CD4-positive, alpha-beta T cell (primary cell): ENCODE measurements at regions of chr2 and their contacts with region 1.

Region 1: GRCh38 chr2:79799729-79800128 is 286.9 kb downstream of the CTNNA2 start:
- DNase-seq: no peak
- ATAC-seq: no peak
- H3K4me3 ChIP-seq: no peak overlapping the region
- H3K4me3 Mint-ChIP-seq: no peak overlapping the region
- H3K27ac ChIP-seq: no peak overlapping the region
- H3K27ac Mint-ChIP-seq: no peak overlapping the region
- H3K4me1 ChIP-seq: no peaks in the 10 kb centered on the region
- H3K4me1 Mint-ChIP-seq: no peaks in the 10 kb centered on the region
- H3K27me3 ChIP-seq: no peaks in the 10 kb centered on the region
- H3K27me3 Mint-ChIP-seq: no peaks in the 10 kb centered on the region
- CTCF ChIP-seq: no peak

Region 2: GRCh38 chr2:79757526-79757925 is 42.2 kb before region 1 on chr2:
- CTCF ChIA-PET with region 1: no interaction called
- POLR2A ChIA-PET with region 1: no interaction called
- intact Hi-C with region 1: loop called in 1 of 2 experiments (anchors 5 kb)
- DNase-seq: no peak
- ATAC-seq: no peak
- H3K4me3 ChIP-seq: no peak overlapping the region
- H3K4me3 Mint-ChIP-seq: no peak overlapping the region
- H3K27ac ChIP-seq: no peak overlapping the region
- H3K27ac Mint-ChIP-seq: no peak overlapping the region
- H3K4me1 ChIP-seq: no peaks in the 10 kb centered on the region
- H3K4me1 Mint-ChIP-seq: no peaks in the 10 kb centered on the region
- H3K27me3 ChIP-seq: no peaks in the 10 kb centered on the region
- H3K27me3 Mint-ChIP-seq: no peaks in the 10 kb centered on the region
- CTCF ChIP-seq: no peak

Region 3: DNA sequence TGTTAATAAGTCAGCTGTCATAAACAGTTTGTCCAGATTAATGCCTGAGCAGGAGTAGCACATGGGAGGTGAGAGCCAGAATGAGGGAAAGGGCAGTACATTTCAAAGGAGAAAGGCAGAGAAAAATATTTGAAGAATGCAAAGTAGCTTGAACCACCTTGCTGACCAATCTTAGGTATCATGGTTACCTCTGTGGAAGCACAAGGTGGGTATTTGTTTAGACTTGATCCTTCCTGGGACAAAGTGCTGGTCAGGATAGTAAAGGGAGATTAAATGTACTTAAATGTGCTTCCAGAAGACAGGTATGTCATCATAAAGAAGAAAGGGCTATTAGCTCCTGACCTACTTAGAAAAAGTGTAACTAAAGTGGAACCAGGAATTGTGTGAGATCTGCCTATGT is 399.8 kb after region 1 on chr2:
- CTCF ChIA-PET with region 1: no interaction called
- POLR2A ChIA-PET with region 1: no interaction called
- intact Hi-C with region 1: no loop called
- DNase-seq: no peak
- ATAC-seq: no peak
- H3K4me3 ChIP-seq: no peak overlapping the region
- H3K4me3 Mint-ChIP-seq: no peak overlapping the region
- H3K27ac ChIP-seq: no peak overlapping the region
- H3K27ac Mint-ChIP-seq: no peak overlapping the region
- H3K4me1 ChIP-seq: no peaks in the 10 kb centered on the region
- H3K4me1 Mint-ChIP-seq: no peaks in the 10 kb centered on the region
- H3K27me3 ChIP-seq: no peaks in the 10 kb centered on the region
- H3K27me3 Mint-ChIP-seq: no peaks in the 10 kb centered on the region
- CTCF ChIP-seq: no peak